RWPE1 (cell line): ENCODE measurements at regions of chr1 and their contacts with region 1.

Region 1: DNA sequence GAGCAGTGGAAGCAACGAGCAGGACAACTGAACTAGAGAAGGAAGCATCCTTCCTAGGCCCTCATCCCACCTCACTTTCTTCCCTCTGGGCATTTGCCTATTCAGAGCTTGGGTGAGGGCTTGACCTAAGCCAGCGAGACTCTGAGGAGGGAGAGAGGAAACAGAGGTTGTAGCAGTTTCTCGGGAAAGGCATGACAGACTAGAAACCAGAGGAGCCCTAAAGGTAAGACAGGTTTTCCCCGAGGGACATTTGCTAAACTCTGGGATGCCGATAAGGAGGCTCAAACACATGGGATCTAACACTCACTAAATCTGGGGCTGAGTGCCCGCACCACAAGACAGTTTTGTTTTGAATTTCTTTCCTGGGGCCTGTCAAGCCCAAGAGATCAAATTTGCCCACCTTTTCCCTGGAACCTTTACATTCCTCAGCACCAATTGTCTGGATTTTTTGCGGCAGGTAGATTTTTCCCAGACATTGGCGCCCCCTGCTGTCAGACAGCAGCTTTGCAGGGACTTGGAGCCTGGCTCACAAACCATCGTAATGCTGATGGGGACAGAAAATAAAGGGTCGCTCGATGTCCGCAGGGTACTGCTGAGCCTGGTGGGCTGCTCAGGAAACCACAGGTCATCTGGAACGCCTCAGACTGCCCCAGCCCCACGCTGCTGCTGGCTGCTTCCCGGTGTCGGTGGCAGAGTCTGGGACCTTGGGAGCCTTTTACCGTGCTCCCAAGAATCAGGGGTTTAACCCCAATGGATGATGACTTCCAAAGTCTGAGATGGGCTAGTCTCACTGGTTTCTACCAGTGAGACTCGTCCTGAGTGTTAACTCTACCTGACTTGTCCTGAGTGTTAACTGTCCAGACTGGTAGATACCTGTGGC is 23.4 kb upstream of the TSPAN2 start:
- DNase-seq: no peak
- H3K27ac ChIP-seq: no peak overlapping the region
- CTCF ChIP-seq: peak; percentile 90

Region 2: DNA sequence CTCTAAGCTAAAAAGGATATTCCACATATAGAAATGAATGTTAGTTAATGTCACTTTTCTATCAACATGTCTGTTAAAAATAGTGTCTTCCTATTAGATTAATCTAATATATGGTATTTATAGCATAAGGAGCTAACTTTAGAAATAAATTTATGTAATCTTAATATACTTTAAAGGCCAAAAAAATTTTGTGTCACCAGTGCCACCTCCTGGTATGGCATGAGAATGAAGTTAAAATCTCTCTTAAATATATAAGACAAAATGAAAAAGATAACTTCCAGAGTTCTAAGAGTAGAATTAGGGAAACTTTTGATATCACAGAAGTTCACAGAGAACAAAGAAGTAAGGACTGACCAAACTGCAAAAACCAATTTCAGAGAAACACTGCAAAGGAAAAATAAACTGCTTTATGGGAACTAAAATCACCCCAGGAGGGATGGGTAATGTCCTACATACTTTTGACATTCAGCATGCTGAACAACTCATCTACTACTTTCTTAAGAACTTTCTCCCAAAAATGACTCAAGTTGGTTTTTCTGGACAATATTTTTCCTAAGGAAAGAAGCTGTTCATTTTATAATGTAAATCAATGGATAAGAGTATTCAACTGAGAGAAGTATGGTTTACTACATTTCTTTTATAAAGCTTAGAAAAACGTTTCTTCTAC is 684.5 kb before region 1 on chr1:
- CTCF ChIA-PET with region 1: no interaction called
- POLR2A ChIA-PET with region 1: no interaction called
- DNase-seq: no peak
- H3K27ac ChIP-seq: no peak overlapping the region
- CTCF ChIP-seq: peak; percentile 36

Region 3: GRCh38 chr1:115052454-115053083 is 60.2 kb before region 1 on chr1:
- CTCF ChIA-PET with region 1: interaction called, 12 read pairs
- POLR2A ChIA-PET with region 1: no interaction called
- DNase-seq: peak; percentile 71
- H3K27ac ChIP-seq: no peak overlapping the region
- CTCF ChIP-seq: peak; percentile 83